ENCODE measurements at regions of chr20 and their contacts with region 1.

Region 1: DNA sequence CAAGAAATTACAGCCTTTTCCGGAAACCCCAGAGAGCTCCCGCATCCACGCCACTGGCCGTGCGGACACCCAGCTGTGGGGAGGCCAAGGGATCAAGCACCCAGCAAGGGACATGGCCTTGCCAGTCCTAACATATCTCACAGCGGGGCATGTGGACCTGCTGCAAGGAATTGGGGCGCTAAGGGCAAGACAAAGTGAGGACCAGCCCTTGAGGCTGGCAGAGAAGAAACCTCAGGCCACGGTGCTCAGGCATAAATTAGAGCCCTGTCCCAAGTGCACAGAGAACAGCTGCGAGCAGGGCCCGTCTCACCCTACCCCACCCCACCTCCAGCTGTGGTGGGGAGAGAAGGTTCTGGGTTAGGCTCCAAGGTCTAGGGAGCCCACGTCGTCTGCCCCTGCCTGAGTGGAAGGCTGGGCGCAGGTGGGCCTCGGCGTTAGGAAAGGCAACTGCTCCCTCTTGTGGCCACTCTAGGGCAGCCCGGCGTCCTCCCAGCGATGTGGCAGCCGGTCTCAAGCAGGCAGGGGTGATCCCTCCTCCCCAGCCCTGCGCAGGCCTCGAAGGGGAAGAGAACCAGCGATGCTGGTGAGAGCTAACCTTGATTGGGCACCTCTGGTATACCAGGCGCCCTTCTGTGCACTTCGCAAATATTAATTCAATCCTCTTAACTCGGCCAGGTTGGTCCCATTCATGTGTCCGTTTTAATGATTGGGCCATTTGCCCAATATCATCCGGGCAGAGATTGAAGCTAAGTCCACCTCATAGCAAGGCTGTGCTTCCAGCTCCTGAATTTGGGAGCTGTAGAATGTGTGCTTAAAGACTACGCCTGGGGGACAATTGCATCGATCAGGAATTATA is 235.8 kb downstream of the NFATC2 start:
- DNase-seq: peak; percentile 67 to 93 (median 84)

Region 2: DNA sequence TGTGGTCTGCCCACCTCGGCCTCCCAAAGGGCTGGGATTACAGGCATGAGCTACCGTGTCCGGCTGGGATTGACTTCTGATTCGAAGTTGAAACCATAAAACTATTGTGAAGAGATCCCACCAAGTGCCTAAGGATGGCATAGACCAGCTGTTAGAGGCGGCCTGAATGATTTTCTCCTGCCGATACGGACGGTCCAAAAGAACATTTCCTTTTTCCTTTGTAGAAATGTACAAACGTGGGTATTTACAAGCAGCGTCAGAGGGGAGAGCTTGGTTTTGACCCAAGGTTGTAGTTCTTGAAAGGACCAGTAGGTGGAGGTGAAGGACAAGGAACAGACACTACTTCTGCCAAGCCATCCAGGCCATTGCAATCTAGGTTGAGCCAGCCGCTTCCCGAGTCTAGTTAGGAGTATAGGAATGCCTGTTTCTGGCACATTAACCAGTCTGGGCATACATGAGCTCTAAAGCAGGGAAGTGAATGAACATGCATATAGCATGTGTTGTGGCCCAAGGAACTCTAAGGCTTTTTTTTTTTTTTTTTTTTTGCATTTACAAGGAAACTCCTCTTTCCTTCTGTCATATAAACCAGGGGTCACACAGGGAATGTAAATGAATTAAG is 319.0 kb before region 1 on chr20:
- intact Hi-C with region 1: loop called (anchors 2 kb)
- DNase-seq: peak; percentile 25 to 90 (median 72)

Region 3: DNA sequence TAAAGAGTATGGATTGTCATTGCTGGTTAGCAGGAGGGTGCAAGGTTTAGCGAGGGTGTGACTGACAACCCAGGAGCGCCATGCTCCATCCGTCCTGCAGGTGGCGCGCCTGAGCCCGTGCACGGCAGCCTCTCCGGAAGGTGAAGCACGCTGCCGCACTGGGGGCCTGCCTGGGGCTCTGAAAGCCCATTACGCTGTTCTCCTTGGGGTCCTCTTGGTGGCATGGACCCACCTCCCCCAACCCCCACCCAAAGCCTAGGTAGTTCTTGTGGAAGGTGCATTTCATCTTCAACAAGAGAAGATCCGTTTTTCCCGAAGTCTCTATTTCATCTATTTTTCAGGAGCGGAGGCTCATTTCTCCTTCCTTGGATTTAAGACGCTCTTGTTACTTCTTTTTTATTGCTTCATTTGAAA is 86.4 kb before region 1 on chr20:
- intact Hi-C with region 1: loop called (anchors 5 kb)
- DNase-seq: peak; percentile 12 to 85 (median 62)

Region 4: GRCh38 chr20:51345601-51346101 is 38.9 kb after region 1 on chr20:
- intact Hi-C with region 1: no loop called
- DNase-seq: no peak

Measured in head of caudate nucleus (tissue), 42 donors.